Right ventricle myocardium inferior (tissue), 1 donor: ENCODE measurements at regions of chr17 and their contacts with region 1.

Region 1: DNA sequence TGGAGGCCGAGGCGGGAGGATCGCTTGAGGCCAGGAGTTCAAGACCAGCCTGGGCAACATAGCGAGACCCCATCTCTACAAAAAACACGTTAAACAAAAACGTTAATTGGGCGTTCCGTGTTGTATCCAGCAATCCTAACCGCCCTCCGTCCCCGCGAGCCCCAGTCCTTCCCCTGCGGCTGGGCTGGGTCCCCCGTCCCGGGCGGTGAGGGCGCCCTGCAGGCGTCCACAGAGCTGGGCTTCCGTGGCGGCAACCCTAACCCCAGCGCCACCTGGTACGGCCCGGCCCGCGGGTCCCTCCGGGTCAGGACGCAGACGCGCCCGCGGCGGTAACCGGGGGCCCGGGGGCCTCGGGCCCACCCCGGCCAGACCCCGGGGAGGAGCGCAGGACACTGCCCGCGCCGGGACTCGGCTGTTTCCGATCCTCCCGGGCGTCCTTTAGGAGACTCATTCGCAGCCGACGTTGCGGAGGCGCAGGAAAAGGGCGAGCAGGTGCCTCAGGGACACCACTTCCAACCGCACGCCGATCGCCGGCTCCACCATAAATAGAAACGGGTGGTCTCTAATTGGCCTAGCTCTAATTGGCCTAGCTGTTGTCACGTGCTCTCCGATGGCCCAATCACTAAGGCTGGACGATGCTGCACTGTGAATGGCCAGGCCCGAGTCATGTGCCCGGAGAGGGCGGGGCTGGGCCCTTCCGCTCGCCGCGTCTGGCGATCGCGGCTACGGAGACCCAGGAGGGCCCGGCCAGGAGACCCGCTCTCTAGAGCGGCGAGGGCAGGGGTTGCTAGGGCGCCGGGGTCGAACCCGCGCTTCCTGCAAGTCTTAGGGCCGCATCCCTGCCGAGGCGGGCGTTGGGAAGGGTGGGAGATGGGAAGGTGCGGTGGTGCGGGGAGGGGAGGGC is 19.0 kb upstream of the CSNK1D start:
- DNase-seq: peak; percentile 97
- ATAC-seq: peak; percentile 96

Region 2: GRCh38 chr17:82037113-82037888 is 255.2 kb before region 1 on chr17 and contains the start of gene DCXR:
- intact Hi-C with region 1: loop called (anchors 5 kb)
- DNase-seq: peak; percentile 99
- ATAC-seq: peak; percentile 98
- total RNA-seq, gene DCXR: 175 TPM

Region 3: DNA sequence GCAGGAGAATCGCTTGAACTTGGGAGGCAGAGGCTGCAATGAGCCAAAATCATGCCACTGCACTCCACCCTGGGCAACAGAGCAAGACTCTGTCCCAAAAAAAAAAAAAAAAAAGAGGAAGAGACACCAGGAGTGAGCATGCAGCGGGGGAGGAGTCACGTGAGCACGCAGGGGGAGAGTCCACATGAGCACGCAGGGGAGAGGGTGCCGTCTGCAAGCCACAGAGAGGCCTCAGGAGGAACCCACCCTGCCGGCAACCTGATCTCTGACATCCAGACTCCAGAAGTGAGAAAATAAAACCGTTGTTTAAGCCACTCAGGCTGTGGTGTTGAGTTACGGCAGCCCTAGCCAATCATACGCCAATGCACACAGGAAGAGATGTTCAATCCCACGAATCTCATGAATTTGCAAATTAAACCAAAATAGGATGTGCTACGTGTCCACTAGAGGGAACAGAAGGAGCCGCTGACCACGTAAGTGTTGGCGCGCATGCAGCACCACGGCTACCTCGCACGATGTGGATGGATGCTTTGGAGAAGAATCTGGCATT is 122.0 kb before region 1 on chr17:
- intact Hi-C with region 1: no loop called
- DNase-seq: peak; percentile 78
- ATAC-seq: peak; percentile 69

Region 4: DNA sequence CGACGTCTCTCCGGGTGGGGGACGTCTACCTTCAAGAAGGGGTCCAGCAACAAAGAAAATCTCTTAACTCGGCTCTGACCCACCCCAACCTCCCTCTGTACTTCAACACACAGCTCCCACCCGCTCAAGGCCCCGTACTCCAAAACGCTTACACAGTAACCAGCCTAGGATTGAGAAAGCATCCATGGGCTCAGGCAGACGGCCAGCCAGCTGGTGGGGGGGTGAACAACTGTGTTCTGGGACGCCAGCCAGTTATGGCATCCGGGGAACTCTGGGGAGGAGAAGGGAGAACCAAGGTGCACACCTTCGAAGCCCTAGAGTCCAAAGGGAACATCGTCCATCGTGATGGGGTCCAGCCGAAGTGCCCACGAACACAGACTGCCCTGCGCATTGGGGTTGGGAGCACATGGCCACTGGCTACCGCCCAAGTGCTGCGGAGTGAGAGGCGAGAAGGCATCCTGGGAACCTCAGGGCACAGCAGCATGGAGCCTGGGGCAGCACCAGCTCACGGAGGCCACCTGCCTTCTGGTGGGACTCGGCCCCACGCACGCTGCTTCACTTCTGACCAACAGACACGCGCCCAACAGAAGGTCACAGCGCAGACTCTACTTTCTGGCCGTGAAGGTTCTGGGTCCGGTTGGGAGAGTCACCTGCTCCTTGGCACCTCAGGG is 49.4 kb before region 1 on chr17:
- intact Hi-C with region 1: loop called (anchors 2 kb)
- DNase-seq: peak; percentile 85
- ATAC-seq: peak; percentile 44

Region 5: DNA sequence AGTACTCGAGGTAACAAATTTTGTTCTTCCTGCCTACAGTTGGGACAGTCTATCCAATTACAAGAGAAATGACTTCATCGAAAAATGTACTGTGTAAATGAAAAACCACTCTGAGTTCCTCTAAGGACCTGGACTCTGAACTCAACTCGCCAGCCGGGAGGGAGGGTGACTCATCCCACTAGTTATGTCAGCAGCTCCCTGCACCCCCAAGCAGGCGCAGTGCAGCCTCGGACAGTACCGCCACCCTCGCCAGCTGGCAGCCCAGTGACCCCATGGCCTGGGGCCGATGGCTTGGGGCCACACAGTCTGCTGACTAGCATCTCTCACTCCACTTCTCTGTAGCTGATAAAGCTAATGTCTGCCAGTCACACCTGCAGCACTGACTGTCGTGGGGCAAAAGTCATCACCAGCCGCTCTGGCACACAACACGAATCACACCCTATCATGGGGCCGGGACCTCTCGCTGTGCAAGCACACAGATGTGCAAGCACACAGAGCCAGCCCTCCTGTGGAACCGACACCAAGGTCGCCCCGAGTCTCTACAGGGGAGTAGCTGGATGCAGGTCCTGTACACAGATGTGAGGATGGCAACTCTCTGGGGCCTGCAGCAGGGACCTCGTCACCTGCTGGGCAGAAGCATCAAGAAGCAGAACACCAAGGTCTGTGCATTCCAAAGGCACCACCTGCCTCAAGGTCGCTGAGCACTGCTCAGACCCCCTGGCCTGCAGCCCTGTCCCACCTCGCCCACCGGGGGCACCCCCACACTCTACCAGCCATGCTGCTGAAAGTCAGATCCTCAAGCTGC is 24.7 kb before region 1 on chr17:
- intact Hi-C with region 1: loop called (anchors 1 kb)
- DNase-seq: peak; percentile 96
- ATAC-seq: peak; percentile 97

Region 6: GRCh38 chr17:82273327-82274133 is 19.0 kb before region 1 on chr17 and contains the start of gene CSNK1D:
- intact Hi-C with region 1: loop called (anchors 1 kb)
- DNase-seq: peak; percentile 96
- ATAC-seq: peak; percentile 95
- total RNA-seq, gene CSNK1D: 62.6 TPM